Calu3 (cell line): ENCODE measurements at regions of chr7 and their contacts with region 1.

Region 1: GRCh38 chr7:126856691-126857291 is 395.9 kb downstream of the GRM8 start:
- DNase-seq: no peak
- H3K4me3 Mint-ChIP-seq: no peak overlapping the region
- H3K27ac Mint-ChIP-seq: no peak overlapping the region
- H3K4me1 Mint-ChIP-seq: no peaks in the 10 kb centered on the region
- H3K27me3 Mint-ChIP-seq: peaks cover 35% of the 10 kb centered on the region
- CTCF ChIP-seq: peak; percentile 28

Region 2: GRCh38 chr7:127047521-127047920 is 190.7 kb after region 1 on chr7:
- CTCF ChIA-PET with region 1: no interaction called
- intact Hi-C with region 1: loop called (anchors 2 kb)
- DNase-seq: peak; percentile 10
- H3K4me3 Mint-ChIP-seq: no peak overlapping the region
- H3K27ac Mint-ChIP-seq: no peak overlapping the region
- H3K4me1 Mint-ChIP-seq: peaks cover 8% of the 10 kb centered on the region
- H3K27me3 Mint-ChIP-seq: peaks cover 16% of the 10 kb centered on the region
- CTCF ChIP-seq: no peak

Region 3: GRCh38 chr7:127066974-127067373 is 210.2 kb after region 1 on chr7:
- CTCF ChIA-PET with region 1: no interaction called
- intact Hi-C with region 1: loop called (anchors 1 kb)
- DNase-seq: peak; percentile 57
- H3K4me3 Mint-ChIP-seq: no peak overlapping the region
- H3K27ac Mint-ChIP-seq: no peak overlapping the region
- H3K4me1 Mint-ChIP-seq: no peaks in the 10 kb centered on the region
- H3K27me3 Mint-ChIP-seq: peaks cover 14% of the 10 kb centered on the region
- CTCF ChIP-seq: peak; percentile 48

Region 4: GRCh38 chr7:127359011-127359410 is 502.2 kb after region 1 on chr7:
- CTCF ChIA-PET with region 1: no interaction called
- intact Hi-C with region 1: no loop called
- DNase-seq: no peak
- H3K4me3 Mint-ChIP-seq: no peak overlapping the region
- H3K27ac Mint-ChIP-seq: no peak overlapping the region
- H3K4me1 Mint-ChIP-seq: no peaks in the 10 kb centered on the region
- H3K27me3 Mint-ChIP-seq: no peaks in the 10 kb centered on the region
- CTCF ChIP-seq: no peak